ENCODE measurements at regions of chr15 and their contacts with region 1.

Region 1: DNA sequence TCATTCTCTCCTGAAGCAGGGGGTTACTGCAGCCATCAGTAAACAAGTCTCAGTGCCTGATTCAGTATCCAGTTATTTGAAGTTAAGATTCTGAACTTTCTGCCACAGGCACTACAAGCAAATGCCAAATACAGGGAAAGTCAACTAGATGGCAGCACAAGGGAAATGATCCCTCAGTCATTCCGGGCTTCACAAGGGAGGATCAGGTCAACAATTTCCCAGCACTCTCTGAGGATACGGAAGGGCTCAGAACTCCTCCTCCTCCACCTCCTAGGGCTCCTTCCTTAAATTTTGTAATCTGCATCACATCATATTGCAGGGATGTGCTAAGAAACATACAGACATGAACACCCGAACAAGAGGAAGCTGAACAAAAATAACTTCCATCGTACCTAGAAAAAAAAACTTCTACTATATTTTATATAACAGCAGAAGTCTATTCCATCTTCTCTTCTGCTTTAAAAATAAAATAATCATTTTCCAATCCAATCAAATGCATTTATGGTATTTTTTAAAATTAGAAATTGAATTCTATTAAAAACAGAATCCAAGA is 187.1 kb downstream of the FMN1 start:
- DNase-seq: no peak
- ATAC-seq: peak; percentile 61 to 74 (median 64)
- H3K4me3 ChIP-seq: peak overlapping the region in 3 of 12 donors; percentile 19 to 27 (median 20)
- H3K27ac ChIP-seq: no peak overlapping the region
- H3K4me1 ChIP-seq: peaks cover 0 to 27% (median 1%) of the 10 kb centered on the region in 12 donors
- H3K27me3 ChIP-seq: no peaks in the 10 kb centered on the region
- CTCF ChIP-seq: peak in 5 of 12 donors; percentile 10 to 35 (median 19)
- POLR2A ChIP-seq: no peak

Region 2: DNA sequence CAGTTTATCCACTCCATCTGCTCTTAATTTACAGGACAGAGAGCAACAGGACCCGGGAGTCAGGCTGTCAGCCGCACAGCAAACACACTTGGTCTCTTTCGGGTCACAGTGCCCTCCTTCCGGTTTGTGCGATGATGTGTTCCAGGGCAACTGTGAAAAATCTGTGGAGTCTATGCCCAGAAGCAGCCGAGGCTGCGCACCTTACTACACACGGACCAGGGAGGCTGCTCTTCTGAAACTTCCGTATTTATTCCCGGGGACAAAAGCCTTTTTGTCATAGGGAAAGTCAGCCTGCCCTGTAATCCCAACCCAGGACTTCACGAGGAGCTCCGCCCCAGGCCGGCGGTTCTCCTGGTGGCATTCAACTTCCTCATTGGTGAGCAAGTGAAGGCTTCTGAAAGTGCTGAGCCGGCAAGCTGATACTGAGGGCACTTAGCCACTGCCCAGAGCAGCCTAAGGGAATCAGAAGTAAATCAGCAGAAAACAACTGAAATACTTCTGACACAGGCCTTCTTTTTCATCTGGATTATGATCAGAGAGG is 60.6 kb after region 1 on chr15:
- intact Hi-C with region 1: loop called in 1 of 10 experiments (anchors 10 kb)
- DNase-seq: peak; percentile 41 to 74 (median 53)
- ATAC-seq: peak; percentile 59 to 85 (median 82)
- H3K4me3 ChIP-seq: peak overlapping the region in 5 of 12 donors; percentile 4 to 45 (median 29)
- H3K27ac ChIP-seq: peak overlapping the region in 3 of 12 donors; percentile 34 to 83 (median 42)
- H3K4me1 ChIP-seq: peaks cover 0 to 19% (median 0%) of the 10 kb centered on the region in 12 donors
- H3K27me3 ChIP-seq: no peaks in the 10 kb centered on the region
- CTCF ChIP-seq: no peak
- POLR2A ChIP-seq: no peak

Region 3: DNA sequence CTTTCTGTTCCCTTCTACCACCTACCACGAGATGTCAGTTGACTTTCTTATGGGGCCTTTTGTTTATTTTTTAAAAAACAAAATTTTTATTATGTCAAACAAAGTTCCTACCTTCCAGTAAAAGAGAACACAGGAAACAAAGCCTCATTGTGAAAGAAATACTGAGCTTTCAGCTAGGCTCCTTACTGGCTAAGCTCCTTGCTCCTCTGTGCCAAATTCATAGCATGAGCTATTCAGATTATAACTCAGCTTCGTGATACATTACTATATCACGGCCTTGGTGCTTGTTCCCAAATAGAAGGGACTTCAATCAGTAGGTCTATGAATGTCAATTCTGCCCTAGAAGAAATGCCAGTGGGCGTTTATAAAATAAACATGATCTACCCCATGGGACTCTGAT is 815.1 kb after region 1 on chr15:
- intact Hi-C with region 1: no loop called
- DNase-seq: no peak
- ATAC-seq: no peak
- H3K4me3 ChIP-seq: no peak overlapping the region
- H3K27ac ChIP-seq: no peak overlapping the region
- H3K4me1 ChIP-seq: no peaks in the 10 kb centered on the region
- H3K27me3 ChIP-seq: no peaks in the 10 kb centered on the region
- CTCF ChIP-seq: no peak
- POLR2A ChIP-seq: no peak